ENCODE measurements at regions of chr16 and their contacts with region 1.

Region 1: DNA sequence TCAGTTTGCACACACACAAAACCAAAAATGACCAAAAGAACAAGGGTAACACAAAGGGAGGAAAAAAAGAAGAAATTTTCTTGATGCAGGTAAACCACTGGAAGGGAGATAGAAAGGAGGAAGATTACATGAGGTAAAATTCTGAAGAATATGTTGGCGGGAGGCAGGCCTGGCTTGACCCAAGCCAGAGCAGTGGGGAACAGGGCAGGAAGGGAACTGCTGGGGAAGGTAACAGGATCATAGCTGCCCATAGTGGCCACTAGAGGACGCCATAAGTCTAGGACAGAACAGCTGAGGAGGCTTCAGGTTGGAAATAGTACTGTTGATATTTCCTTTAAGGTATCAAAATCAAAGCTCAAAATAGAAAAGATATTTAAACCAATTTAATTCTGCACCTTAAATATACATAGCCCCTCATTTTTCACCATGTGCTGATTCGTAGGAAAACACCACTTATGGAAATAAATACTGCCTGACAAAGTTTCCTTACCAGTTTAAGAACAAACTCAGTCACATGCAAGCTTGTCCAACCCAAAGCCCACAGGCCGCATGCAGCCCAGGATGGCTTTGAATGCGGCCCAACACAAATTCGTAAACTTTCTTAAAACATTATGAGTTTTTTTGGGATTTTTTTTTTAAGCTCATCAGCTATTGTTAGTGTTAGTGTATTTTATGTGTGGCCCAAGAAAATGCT is 15.5 kb downstream of the VPS35 start:
- DNase-seq: peak; percentile 58
- H3K4me3 Mint-ChIP-seq: no peak overlapping the region
- H3K27ac Mint-ChIP-seq: no peak overlapping the region
- H3K4me1 Mint-ChIP-seq: no peaks in the 10 kb centered on the region
- H3K27me3 Mint-ChIP-seq: no peaks in the 10 kb centered on the region

Region 2: GRCh38 chr16:46658925-46659324 is 14.5 kb before region 1 on chr16:
- CTCF ChIA-PET with region 1: interaction called, 12 read pairs
- POLR2A ChIA-PET with region 1: interaction called, 3 read pairs
- DNase-seq: peak; percentile 30
- H3K4me3 Mint-ChIP-seq: no peak overlapping the region
- H3K27ac Mint-ChIP-seq: peak overlapping the region; percentile 24
- H3K4me1 Mint-ChIP-seq: peaks cover 13% of the 10 kb centered on the region
- H3K27me3 Mint-ChIP-seq: no peaks in the 10 kb centered on the region

Region 3: DNA sequence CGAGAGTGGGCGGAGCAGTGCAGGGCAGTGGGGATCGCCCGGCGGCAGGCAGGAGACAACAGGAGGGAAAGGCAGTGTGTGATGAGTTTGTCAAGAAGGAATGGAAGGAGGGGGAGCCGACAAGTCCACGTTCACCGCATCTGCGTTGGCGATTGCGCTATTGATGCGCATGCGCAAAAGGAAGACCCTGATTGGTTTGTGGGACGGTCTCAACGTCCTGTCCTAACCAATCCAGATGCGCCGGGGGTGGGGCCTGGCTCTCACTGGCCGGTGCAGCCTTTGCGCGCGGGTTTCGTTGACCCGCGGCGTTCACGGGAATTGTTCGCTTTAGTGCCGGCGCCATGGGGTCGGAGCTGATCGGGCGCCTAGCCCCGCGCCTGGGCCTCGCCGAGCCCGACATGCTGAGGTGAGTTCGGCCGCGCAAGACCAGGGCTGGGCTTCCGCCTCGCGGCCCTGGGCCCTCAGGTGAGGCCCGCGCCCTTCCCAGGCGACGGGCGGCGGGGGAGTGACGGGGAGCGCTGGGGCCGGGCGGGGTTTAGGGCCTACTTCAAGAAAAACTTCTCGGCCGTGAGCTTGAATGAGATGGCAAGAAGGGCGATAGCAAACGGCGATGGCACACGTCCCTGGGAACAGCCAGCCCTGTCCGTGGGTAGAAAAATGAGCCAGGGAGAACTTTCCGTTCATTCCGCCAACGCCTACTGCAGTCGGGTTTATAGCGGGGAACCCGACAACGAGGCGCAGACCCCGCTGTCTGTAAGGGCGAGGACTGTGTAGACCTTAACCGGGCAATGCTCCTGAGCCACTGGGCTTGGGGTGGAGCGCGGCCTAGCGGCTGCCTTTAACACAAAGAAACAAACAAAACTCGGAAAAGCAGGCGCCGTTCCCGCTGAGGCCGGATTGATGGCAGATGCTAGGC is 16.2 kb after region 1 on chr16 and contains the start of gene ORC6:
- CTCF ChIA-PET with region 1: interaction called, 32 read pairs
- POLR2A ChIA-PET with region 1: interaction called, 5 read pairs
- DNase-seq: peak; percentile 96
- H3K4me3 Mint-ChIP-seq: no peak within 1 kb of the TSS
- H3K27ac Mint-ChIP-seq: no peak within 1 kb of the TSS
- H3K4me1 Mint-ChIP-seq: peaks cover 27% of the 10 kb centered on the region
- H3K27me3 Mint-ChIP-seq: no peaks in the 10 kb centered on the region
- total RNA-seq, gene ORC6: 35.1 to 35.8 TPM

Region 4: DNA sequence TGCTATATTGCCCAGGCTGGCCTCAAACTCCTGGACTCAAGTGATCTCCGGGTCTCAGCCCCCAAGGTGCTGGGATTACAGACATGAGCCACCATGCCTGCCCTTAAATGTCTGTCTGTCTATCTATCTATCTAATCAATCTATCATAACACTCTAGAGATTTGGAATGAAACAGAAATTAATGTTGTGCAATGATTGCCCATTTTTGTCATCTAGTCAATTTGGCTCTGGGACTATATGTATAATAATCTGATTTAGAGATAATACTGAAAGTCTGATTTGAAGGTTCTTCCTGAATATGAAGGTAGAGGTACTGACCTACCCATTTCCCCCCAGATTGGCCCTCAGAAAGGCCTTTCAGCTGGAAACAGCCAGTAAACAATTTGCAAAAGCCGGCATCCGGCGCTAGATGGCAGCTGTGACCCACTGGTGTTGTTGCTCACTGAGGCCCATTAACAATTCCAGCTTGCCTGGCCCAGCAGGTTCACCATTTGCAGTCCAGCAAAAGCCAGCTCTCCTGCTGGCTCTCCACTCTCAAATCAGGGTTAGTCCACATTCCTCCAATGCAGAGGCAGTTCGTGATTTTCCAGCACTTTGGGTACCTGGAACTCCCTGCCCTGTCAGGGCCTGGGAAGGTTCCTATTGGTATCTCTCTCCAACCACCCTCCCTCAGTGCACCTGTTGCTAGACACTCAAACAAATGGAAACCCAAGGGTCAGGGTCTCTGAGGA is 180.4 kb after region 1 on chr16:
- CTCF ChIA-PET with region 1: interaction called, 11 read pairs
- POLR2A ChIA-PET with region 1: no interaction called
- DNase-seq: peak; percentile 75
- H3K4me3 Mint-ChIP-seq: no peak overlapping the region
- H3K27ac Mint-ChIP-seq: no peak overlapping the region
- H3K4me1 Mint-ChIP-seq: peaks cover 3% of the 10 kb centered on the region
- H3K27me3 Mint-ChIP-seq: no peaks in the 10 kb centered on the region

Region 5: GRCh38 chr16:46908540-46909372 is 235.3 kb after region 1 on chr16:
- CTCF ChIA-PET with region 1: interaction called, 37 read pairs
- POLR2A ChIA-PET with region 1: no interaction called
- DNase-seq: peak; percentile 69
- H3K4me3 Mint-ChIP-seq: no peak overlapping the region
- H3K27ac Mint-ChIP-seq: peak overlapping the region; percentile 28
- H3K4me1 Mint-ChIP-seq: peaks cover 24% of the 10 kb centered on the region
- H3K27me3 Mint-ChIP-seq: no peaks in the 10 kb centered on the region

Region 6: GRCh38 chr16:46929378-46930332 is 256.2 kb after region 1 on chr16:
- CTCF ChIA-PET with region 1: interaction called, 20 read pairs
- POLR2A ChIA-PET with region 1: no interaction called
- DNase-seq: peak; percentile 75
- H3K4me3 Mint-ChIP-seq: no peak overlapping the region
- H3K27ac Mint-ChIP-seq: no peak overlapping the region
- H3K4me1 Mint-ChIP-seq: peaks cover 1% of the 10 kb centered on the region
- H3K27me3 Mint-ChIP-seq: no peaks in the 10 kb centered on the region

Region 7: GRCh38 chr16:47156680-47157215 is 483.3 kb after region 1 on chr16:
- CTCF ChIA-PET with region 1: no interaction called
- POLR2A ChIA-PET with region 1: no interaction called
- DNase-seq: no peak
- H3K4me3 Mint-ChIP-seq: no peak overlapping the region
- H3K27ac Mint-ChIP-seq: no peak overlapping the region
- H3K4me1 Mint-ChIP-seq: no peaks in the 10 kb centered on the region
- H3K27me3 Mint-ChIP-seq: no peaks in the 10 kb centered on the region